ENCODE measurements at regions of chr3 and their contacts with region 1.

Region 1: DNA sequence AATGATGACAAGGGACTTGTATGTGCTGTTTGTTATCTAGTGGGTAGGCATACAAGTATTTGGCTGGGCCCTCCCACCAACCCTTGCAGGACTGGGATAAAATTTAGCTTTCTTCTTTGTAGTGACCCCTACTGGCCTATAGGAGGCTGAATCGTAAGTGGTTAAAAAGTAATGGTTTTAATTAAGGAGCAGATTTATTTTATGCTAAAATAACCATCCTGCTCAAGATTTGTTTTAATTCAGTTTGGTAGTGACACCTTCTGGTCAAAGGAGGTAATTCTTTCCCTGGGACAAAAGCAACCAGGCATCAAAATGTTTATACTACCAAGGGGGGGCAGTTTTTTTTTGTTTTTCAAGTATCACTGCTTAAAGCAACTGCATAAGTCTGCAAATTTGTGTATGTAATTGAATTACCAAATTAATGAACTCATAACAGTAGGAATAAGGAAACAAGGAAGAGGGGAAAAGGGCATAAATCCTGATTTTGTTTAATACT is 70.7 kb downstream of the TOP2B start:
- DNase-seq: no peak
- H3K4me3 ChIP-seq: no peak overlapping the region
- H3K27ac ChIP-seq: no peak overlapping the region
- H3K4me1 ChIP-seq: peaks cover 7% of the 10 kb centered on the region
- H3K27me3 ChIP-seq: no peaks in the 10 kb centered on the region
- CTCF ChIP-seq: peak; percentile 66 to 86 (median 82)
- POLR2A ChIP-seq: no peak

Region 2: DNA sequence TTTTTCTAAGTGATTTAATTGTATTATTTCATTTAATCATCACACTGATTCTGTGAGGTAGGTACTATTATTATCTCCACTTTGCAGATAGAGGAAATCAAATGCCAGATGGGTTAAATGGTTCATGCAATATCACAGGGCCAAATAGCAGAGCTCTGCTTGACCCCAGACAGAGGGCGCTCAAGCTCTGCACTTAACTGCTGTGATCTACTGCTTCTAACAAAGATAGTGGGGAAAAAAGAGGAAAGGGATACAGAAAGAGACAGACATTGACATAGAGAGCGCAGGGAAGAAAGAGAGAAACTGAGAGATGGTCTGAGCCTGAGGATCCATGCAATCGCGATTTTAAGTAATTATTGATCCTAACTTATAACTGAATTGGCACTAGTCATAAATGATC is 820.3 kb before region 1 on chr3:
- intact Hi-C with region 1: loop called (anchors 5 kb)
- DNase-seq: peak; percentile 39
- H3K4me3 ChIP-seq: no peak overlapping the region
- H3K27ac ChIP-seq: no peak overlapping the region
- H3K4me1 ChIP-seq: no peaks in the 10 kb centered on the region
- H3K27me3 ChIP-seq: no peaks in the 10 kb centered on the region
- CTCF ChIP-seq: peak in 3 of 4 experiments; percentile 56 to 74 (median 68)
- POLR2A ChIP-seq: no peak

Region 3: GRCh38 chr3:24963762-24964625 is 630.1 kb before region 1 on chr3:
- intact Hi-C with region 1: loop called (anchors 5 kb)
- DNase-seq: no peak
- H3K4me3 ChIP-seq: no peak overlapping the region
- H3K27ac ChIP-seq: no peak overlapping the region
- H3K4me1 ChIP-seq: no peaks in the 10 kb centered on the region
- H3K27me3 ChIP-seq: no peaks in the 10 kb centered on the region
- CTCF ChIP-seq: peak; percentile 39 to 71 (median 55)
- POLR2A ChIP-seq: no peak

Region 4: DNA sequence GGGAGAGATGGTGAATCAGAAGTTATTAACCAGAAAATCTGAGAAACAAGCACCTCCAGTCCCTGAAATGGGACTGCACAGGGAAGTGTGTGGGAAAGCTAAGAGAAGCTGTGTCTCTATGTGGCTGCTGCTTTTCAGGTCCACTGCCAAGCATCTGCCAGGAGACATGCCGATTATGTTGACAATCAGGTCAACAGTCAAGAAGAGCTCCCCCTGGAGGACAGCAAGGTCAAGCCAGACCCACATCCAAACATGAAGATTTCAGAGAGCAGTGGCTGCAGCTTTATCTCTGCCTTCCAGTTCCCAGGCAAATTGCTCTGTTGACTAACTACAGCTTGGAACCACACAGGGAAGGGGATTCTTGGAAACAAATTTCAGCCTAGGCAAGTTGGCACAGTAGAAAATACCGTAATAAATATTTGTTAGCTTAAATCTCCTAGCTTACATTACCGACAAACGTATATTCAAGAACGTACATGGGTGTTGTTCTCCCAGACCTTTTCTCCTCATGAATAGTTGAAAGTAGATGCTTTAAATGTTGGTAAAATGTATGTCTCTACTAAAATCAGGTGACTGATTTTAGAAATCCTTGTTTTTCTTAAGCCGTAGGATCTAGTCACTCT is 560.5 kb before region 1 on chr3:
- intact Hi-C with region 1: loop called (anchors 5 kb)
- DNase-seq: no peak
- H3K4me3 ChIP-seq: no peak overlapping the region
- H3K27ac ChIP-seq: no peak overlapping the region
- H3K4me1 ChIP-seq: no peaks in the 10 kb centered on the region
- H3K27me3 ChIP-seq: no peaks in the 10 kb centered on the region
- CTCF ChIP-seq: peak in 3 of 4 experiments; percentile 14 to 39 (median 15)
- POLR2A ChIP-seq: no peak

Region 5: DNA sequence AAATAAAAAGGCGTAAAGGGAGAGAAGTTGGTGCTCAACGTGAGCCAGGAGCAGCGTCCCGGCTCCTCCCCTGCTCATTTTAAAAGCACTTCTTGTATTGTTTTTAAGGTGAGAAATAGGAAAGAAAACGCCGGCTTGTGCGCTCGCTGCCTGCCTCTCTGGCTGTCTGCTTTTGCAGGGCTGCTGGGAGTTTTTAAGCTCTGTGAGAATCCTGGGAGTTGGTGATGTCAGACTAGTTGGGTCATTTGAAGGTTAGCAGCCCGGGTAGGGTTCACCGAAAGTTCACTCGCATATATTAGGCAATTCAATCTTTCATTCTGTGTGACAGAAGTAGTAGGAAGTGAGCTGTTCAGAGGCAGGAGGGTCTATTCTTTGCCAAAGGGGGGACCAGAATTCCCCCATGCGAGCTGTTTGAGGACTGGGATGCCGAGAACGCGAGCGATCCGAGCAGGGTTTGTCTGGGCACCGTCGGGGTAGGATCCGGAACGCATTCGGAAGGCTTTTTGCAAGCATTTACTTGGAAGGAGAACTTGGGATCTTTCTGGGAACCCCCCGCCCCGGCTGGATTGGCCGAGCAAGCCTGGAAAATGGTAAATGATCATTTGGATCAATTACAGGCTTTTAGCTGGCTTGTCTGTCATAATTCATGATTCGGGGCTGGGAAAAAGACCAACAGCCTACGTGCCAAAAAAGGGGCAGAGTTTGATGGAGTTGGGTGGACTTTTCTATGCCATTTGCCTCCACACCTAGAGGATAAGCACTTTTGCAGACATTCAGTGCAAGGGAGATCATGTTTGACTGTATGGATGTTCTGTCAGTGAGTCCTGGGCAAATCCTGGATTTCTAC is 165.9 kb before region 1 on chr3 and contains the start of gene RARB:
- intact Hi-C with region 1: loop called (anchors 2 kb)
- DNase-seq: peak; percentile 79
- H3K4me3 ChIP-seq: peak within 1 kb of the TSS; percentile 38 to 44
- H3K27ac ChIP-seq: peak within 1 kb of the TSS; percentile 82
- H3K4me1 ChIP-seq: peaks cover 4% of the 10 kb centered on the region
- H3K27me3 ChIP-seq: peaks cover 3% of the 10 kb centered on the region
- CTCF ChIP-seq: no peak
- POLR2A ChIP-seq: peak; percentile 91
- total RNA-seq, gene RARB: 4.4 to 17.2 TPM

Region 6: DNA sequence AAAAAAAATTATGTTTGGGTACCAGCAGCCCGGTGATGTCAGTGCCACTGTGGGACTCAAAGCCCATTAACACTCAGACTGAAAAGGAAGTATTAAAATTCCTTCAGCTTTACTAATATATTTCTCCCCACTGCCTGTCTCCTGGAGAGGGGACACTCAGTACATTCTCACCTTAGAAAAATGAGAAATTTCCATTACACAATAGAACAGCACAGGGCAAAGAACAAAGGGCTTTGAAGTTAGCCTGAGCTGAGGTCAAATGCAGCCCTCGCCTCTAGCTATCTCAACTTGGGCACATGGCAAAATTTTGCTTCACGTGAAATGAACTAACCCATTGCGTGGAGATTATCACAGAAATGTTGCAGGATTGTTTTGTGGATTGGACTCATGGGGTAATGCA is 85.2 kb before region 1 on chr3:
- intact Hi-C with region 1: loop called (anchors 5 kb)
- DNase-seq: no peak
- H3K4me3 ChIP-seq: no peak overlapping the region
- H3K27ac ChIP-seq: peak overlapping the region; percentile 36 to 56
- H3K4me1 ChIP-seq: no peaks in the 10 kb centered on the region
- H3K27me3 ChIP-seq: no peaks in the 10 kb centered on the region
- CTCF ChIP-seq: no peak
- POLR2A ChIP-seq: no peak

Region 7: DNA sequence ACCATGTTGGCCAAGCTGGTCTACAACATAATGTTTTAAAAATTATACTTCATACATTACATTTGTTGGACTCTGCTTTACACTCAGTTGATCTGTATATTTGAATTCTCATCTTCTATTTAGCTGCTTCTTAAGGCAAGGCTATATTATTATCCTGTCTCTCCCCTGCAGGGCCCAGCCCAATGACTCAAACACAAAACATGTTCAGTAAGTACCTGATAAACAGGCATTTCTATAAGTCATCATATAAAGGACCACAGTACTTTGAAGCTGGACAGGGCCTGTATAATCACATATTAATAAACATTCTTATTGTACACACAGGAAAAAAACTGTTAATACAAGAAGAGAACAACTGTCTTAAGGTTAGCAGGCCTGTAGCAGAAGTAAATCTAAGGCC is 153.0 kb after region 1 on chr3:
- intact Hi-C with region 1: no loop called
- DNase-seq: no peak
- H3K4me3 ChIP-seq: no peak overlapping the region
- H3K27ac ChIP-seq: no peak overlapping the region
- H3K4me1 ChIP-seq: no peaks in the 10 kb centered on the region
- H3K27me3 ChIP-seq: no peaks in the 10 kb centered on the region
- CTCF ChIP-seq: no peak
- POLR2A ChIP-seq: no peak